Panc1 (cell line): ENCODE measurements at regions of chr1 and their contacts with region 1.

Region 1: GRCh38 chr1:10796019-10796944 is at the start of gene CASZ1:
- DNase-seq: peak; percentile 62
- ATAC-seq: peak; percentile 73
- H3K4me3 ChIP-seq: peak within 1 kb of the TSS; percentile 69 to 76
- H3K27ac ChIP-seq: peak within 1 kb of the TSS; percentile 86
- H3K4me1 ChIP-seq: peaks cover 14% of the 10 kb centered on the region
- H3K27me3 ChIP-seq: no peaks in the 10 kb centered on the region
- CTCF ChIP-seq: no peak
- total RNA-seq, gene CASZ1: 27.8 TPM

Region 2: DNA sequence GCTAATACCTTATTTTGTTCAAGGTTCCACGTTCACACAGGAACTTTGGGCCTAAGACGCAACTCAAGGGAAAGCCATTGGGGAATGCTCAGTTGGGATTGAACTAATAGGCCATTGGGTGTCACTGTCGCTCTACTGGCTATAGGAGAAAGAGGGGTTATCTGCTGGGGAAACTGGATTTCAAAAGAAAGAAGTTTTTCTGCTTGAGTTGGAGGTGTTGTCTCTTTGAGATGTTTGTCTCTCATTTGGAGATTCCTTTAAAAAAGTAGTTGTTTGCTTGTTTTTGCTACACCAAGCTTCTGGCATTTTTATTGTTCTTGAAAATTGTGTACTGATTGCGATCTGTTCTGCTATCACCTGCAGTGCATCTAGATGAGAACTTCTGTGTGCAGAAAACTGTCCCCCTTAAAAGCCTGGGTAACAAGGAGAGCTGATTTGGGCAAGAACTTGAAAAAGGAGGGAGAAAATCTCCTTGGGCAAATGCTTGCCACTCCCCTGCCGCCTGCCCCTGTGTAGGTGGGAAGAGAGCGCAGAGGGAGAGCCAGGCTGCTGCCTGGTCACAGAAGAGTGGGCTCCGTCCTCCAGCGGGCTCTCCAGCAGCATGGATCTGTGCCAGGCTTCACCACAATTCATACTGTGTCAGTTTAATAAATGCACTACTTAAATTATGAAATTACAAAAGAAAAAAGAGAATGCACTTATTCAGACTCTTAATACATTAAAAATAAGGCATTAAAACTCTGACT is 281.6 kb before region 1 on chr1:
- CTCF ChIA-PET with region 1: no interaction called
- POLR2A ChIA-PET with region 1: no interaction called
- in situ Hi-C with region 1: no loop called
- intact Hi-C with region 1: loop called (anchors 1 kb)
- DNase-seq: peak; percentile 67
- ATAC-seq: peak; percentile 63
- H3K4me3 ChIP-seq: no peak overlapping the region
- H3K27ac ChIP-seq: peak overlapping the region; percentile 94
- H3K4me1 ChIP-seq: peaks cover 98% of the 10 kb centered on the region
- H3K27me3 ChIP-seq: no peaks in the 10 kb centered on the region
- CTCF ChIP-seq: peak; percentile 92

Region 3: DNA sequence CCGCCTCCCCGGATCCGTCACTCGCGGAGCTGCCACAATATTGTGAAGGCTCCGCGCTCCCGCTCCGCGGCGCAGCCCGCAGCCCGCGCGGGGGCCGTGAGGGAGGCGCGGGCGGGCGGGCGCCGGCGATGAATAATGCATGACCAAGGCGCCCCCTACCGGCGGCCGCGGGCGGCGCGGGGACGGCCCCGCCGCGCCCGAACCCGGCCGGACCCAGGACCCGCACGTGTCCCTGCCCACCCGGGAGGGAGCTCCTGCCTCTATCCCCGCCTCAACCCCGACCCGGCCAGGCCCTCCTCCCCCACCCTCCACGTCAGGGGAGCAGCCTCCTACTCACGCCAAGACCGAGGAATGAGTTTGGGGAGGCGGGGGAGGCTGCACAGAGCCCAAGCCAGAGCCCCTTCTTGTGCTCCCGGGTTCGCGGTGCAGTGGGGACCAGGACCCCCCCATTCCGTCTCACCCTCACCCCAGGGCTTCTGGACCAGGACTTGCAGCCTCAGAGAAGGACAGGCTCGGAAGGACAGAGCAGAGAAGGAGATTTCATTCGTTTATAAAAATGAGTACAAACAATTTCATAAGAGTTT is 70.9 kb after region 1 on chr1:
- CTCF ChIA-PET with region 1: no interaction called
- POLR2A ChIA-PET with region 1: no interaction called
- in situ Hi-C with region 1: no loop called
- intact Hi-C with region 1: loop called (anchors 2 kb)
- DNase-seq: no peak
- ATAC-seq: peak; percentile 92
- H3K4me3 ChIP-seq: peak overlapping the region; percentile 30 to 46
- H3K27ac ChIP-seq: peak overlapping the region; percentile 65
- H3K4me1 ChIP-seq: peaks cover 16% of the 10 kb centered on the region
- H3K27me3 ChIP-seq: no peaks in the 10 kb centered on the region
- CTCF ChIP-seq: peak; percentile 95